ENCODE measurements at regions of chr16 and their contacts with region 1.

Region 1: GRCh38 chr16:67159593-67160406 is at the starts of genes FBXL8 and TRADD:
- DNase-seq: peak; percentile 84
- ATAC-seq: peak; percentile 65
- H3K4me3 Mint-ChIP-seq: peak within 1 kb of the TSS; percentile 94
- H3K27ac Mint-ChIP-seq: peak within 1 kb of the TSS; percentile 94
- H3K4me1 Mint-ChIP-seq: peaks cover 60% of the 10 kb centered on the region
- H3K27me3 Mint-ChIP-seq: peaks cover 18% of the 10 kb centered on the region
- CTCF ChIP-seq: no peak
- total RNA-seq, gene FBXL8: 5.6 and 6.5 TPM in 2 replicates
- total RNA-seq, gene TRADD: 31.5 and 37.3 TPM in 2 replicates

Region 2: GRCh38 chr16:66228792-66229191 is 931.0 kb before region 1 on chr16:
- CTCF ChIA-PET with region 1: no interaction called
- POLR2A ChIA-PET with region 1: no interaction called
- intact Hi-C with region 1: no loop called
- DNase-seq: no peak
- ATAC-seq: no peak
- H3K4me3 Mint-ChIP-seq: no peak overlapping the region
- H3K27ac Mint-ChIP-seq: no peak overlapping the region
- H3K4me1 Mint-ChIP-seq: no peaks in the 10 kb centered on the region
- H3K27me3 Mint-ChIP-seq: peaks cover 9% of the 10 kb centered on the region
- CTCF ChIP-seq: no peak

Region 3: GRCh38 chr16:66954097-66954659 is 205.6 kb before region 1 on chr16:
- CTCF ChIA-PET with region 1: interaction called, 7 read pairs
- POLR2A ChIA-PET with region 1: no interaction called
- intact Hi-C with region 1: loop called (anchors 1 kb)
- DNase-seq: peak; percentile 51
- ATAC-seq: peak; percentile 78
- H3K4me3 Mint-ChIP-seq: no peak overlapping the region
- H3K27ac Mint-ChIP-seq: no peak overlapping the region
- H3K4me1 Mint-ChIP-seq: no peaks in the 10 kb centered on the region
- H3K27me3 Mint-ChIP-seq: peaks cover 23% of the 10 kb centered on the region
- CTCF ChIP-seq: no peak

Region 4: DNA sequence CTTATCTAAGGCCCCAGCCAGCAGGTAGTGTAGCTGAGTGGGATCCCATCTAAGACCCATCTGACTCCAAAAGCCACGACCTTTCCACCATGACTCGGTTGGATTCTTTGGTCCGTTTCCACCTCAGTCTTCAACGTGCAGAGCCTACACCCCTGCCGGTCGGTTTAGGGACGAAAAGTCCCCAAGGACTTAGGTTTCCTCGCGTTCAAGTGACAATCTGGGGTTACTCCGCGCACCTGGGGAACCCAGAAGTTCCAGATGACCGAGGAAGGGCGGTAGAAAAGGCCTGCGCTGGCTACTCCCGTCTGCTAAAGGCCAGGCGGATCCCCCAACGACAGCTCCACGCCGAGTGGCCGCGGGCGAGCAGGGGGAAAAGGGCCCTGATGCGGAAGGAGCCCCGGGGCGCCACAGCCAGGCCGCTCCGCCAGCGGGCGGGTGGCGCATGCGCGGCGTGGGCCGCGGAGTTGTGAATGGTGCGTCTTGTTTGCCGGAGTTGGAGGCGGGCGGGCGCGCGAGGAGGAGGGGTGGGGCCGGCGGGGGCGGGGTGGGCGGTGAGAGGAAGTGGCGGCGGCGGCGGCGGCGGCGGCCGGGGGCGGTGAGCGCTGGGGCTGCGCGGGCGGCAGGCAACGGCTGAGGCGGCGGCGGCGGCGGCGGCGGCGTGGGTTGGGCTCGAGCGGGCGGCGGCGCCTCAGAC is 131.1 kb before region 1 on chr16 and contains the start of gene CBFB:
- CTCF ChIA-PET with region 1: interaction called, 5 read pairs
- POLR2A ChIA-PET with region 1: interaction called, 18 read pairs
- intact Hi-C with region 1: loop called (anchors 1 kb)
- DNase-seq: peak; percentile 94
- ATAC-seq: peak; percentile 86
- H3K4me3 Mint-ChIP-seq: peak within 1 kb of the TSS; percentile 93
- H3K27ac Mint-ChIP-seq: peak within 1 kb of the TSS; percentile 96
- H3K4me1 Mint-ChIP-seq: peaks cover 40% of the 10 kb centered on the region
- H3K27me3 Mint-ChIP-seq: no peaks in the 10 kb centered on the region
- CTCF ChIP-seq: no peak
- total RNA-seq, gene CBFB: 66.6 and 67.3 TPM in 2 replicates

Region 5: DNA sequence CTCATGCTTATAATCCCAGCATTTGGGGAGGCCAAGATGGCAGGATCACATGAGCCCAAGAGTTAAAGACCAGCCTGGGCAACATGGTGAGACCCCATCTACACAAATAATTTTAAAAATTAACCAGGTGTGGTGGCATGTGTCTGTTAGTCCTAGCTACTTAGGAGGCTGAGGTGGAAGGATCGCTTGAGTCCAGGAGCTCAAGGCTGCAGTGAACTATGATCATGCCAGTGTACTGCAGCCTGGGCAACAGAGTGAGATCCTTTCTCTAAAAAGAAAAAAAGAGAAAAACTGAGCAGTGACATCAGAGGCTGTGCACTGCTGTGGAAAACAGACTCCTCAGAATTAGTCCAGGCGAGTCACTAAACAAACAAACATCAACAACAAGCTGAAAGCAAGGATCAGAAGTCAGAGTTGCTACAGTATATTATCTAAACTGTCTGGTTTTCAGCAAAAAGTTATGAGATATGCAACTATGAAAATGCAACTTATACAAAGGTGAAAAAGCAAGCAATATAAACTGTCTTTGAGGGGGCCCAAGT is 91.5 kb before region 1 on chr16:
- CTCF ChIA-PET with region 1: no interaction called
- POLR2A ChIA-PET with region 1: no interaction called
- intact Hi-C with region 1: no loop called
- DNase-seq: no peak
- ATAC-seq: no peak
- H3K4me3 Mint-ChIP-seq: no peak overlapping the region
- H3K27ac Mint-ChIP-seq: no peak overlapping the region
- H3K4me1 Mint-ChIP-seq: peaks cover 3% of the 10 kb centered on the region
- H3K27me3 Mint-ChIP-seq: no peaks in the 10 kb centered on the region
- CTCF ChIP-seq: no peak

Region 6: GRCh38 chr16:67183627-67184328 is 24.0 kb after region 1 on chr16 and contains the start of gene MATCAP1:
- CTCF ChIA-PET with region 1: interaction called, 15 read pairs
- POLR2A ChIA-PET with region 1: interaction called, 5 read pairs
- intact Hi-C with region 1: loop called (anchors 1 kb)
- DNase-seq: peak; percentile 94
- ATAC-seq: peak; percentile 96
- H3K4me3 Mint-ChIP-seq: peak within 1 kb of the TSS; percentile 85
- H3K27ac Mint-ChIP-seq: no peak within 1 kb of the TSS
- H3K4me1 Mint-ChIP-seq: peaks cover 14% of the 10 kb centered on the region
- H3K27me3 Mint-ChIP-seq: peaks cover 12% of the 10 kb centered on the region
- CTCF ChIP-seq: no peak
- total RNA-seq, gene MATCAP1: 10.6 and 18.7 TPM in 2 replicates

Region 7: GRCh38 chr16:67246934-67247697 is 87.3 kb after region 1 on chr16 and contains the start of gene FHOD1:
- CTCF ChIA-PET with region 1: interaction called, 3 read pairs
- POLR2A ChIA-PET with region 1: interaction called, 20 read pairs
- intact Hi-C with region 1: loop called (anchors 1 kb)
- DNase-seq: peak; percentile 100
- ATAC-seq: peak; percentile 70
- H3K4me3 Mint-ChIP-seq: peak within 1 kb of the TSS; percentile 85
- H3K27ac Mint-ChIP-seq: peak within 1 kb of the TSS; percentile 80
- H3K4me1 Mint-ChIP-seq: peaks cover 50% of the 10 kb centered on the region
- H3K27me3 Mint-ChIP-seq: peaks cover 2% of the 10 kb centered on the region
- CTCF ChIP-seq: no peak
- total RNA-seq, gene FHOD1: 45.5 and 50.4 TPM in 2 replicates

Region 8: GRCh38 chr16:67268136-67268579 is 108.4 kb after region 1 on chr16:
- CTCF ChIA-PET with region 1: no interaction called
- POLR2A ChIA-PET with region 1: no interaction called
- intact Hi-C with region 1: no loop called
- DNase-seq: no peak
- ATAC-seq: no peak
- H3K4me3 Mint-ChIP-seq: no peak overlapping the region
- H3K27ac Mint-ChIP-seq: no peak overlapping the region
- H3K4me1 Mint-ChIP-seq: no peaks in the 10 kb centered on the region
- H3K27me3 Mint-ChIP-seq: peaks cover 2% of the 10 kb centered on the region
- CTCF ChIP-seq: no peak